Activated CD4-positive, alpha-beta T cell treated with anti-CD3 and anti-CD28 coated beads for 36 hours (primary cell): ENCODE measurements at regions of chr19 and their contacts with region 1.

Region 1: GRCh38 chr19:47428177-47428894 is 9.0 kb upstream of the MEIS3 start:
- DNase-seq: peak; percentile 94
- ATAC-seq: peak; percentile 75
- H3K4me3 Mint-ChIP-seq: no peak overlapping the region
- H3K27ac Mint-ChIP-seq: no peak overlapping the region
- H3K4me1 Mint-ChIP-seq: peaks cover 13% of the 10 kb centered on the region
- H3K27me3 Mint-ChIP-seq: peaks cover 39% of the 10 kb centered on the region

Region 2: GRCh38 chr19:47296036-47296435 is 132.3 kb before region 1 on chr19:
- CTCF ChIA-PET with region 1: interaction called, 17 read pairs
- POLR2A ChIA-PET with region 1: no interaction called
- intact Hi-C with region 1: loop called (anchors 1 kb)
- DNase-seq: peak; percentile 87
- ATAC-seq: peak; percentile 98
- H3K4me3 Mint-ChIP-seq: no peak overlapping the region
- H3K27ac Mint-ChIP-seq: no peak overlapping the region
- H3K4me1 Mint-ChIP-seq: peaks cover 2% of the 10 kb centered on the region
- H3K27me3 Mint-ChIP-seq: no peaks in the 10 kb centered on the region

Region 3: GRCh38 chr19:47391510-47392223 is 36.7 kb before region 1 on chr19:
- CTCF ChIA-PET with region 1: interaction called, 7 read pairs
- POLR2A ChIA-PET with region 1: no interaction called
- intact Hi-C with region 1: loop called in 1 of 2 experiments (anchors 2 kb)
- DNase-seq: peak; percentile 92
- ATAC-seq: peak; percentile 95
- H3K4me3 Mint-ChIP-seq: no peak overlapping the region
- H3K27ac Mint-ChIP-seq: no peak overlapping the region
- H3K4me1 Mint-ChIP-seq: no peaks in the 10 kb centered on the region
- H3K27me3 Mint-ChIP-seq: no peaks in the 10 kb centered on the region

Region 4: GRCh38 chr19:47447470-47448359 is 19.4 kb after region 1 on chr19:
- CTCF ChIA-PET with region 1: interaction called, 11 read pairs
- POLR2A ChIA-PET with region 1: no interaction called
- intact Hi-C with region 1: loop called in 1 of 2 experiments (anchors 1 kb)
- DNase-seq: peak; percentile 90
- ATAC-seq: peak; percentile 85
- H3K4me3 Mint-ChIP-seq: peak overlapping the region; percentile 1
- H3K27ac Mint-ChIP-seq: no peak overlapping the region
- H3K4me1 Mint-ChIP-seq: peaks cover 44% of the 10 kb centered on the region
- H3K27me3 Mint-ChIP-seq: peaks cover 56% of the 10 kb centered on the region

Region 5: GRCh38 chr19:47561440-47562057 is 133.2 kb after region 1 on chr19:
- CTCF ChIA-PET with region 1: no interaction called
- POLR2A ChIA-PET with region 1: no interaction called
- intact Hi-C with region 1: no loop called
- DNase-seq: no peak
- ATAC-seq: no peak
- H3K4me3 Mint-ChIP-seq: no peak overlapping the region
- H3K27ac Mint-ChIP-seq: no peak overlapping the region
- H3K4me1 Mint-ChIP-seq: no peaks in the 10 kb centered on the region
- H3K27me3 Mint-ChIP-seq: no peaks in the 10 kb centered on the region

Region 6: GRCh38 chr19:47600246-47601179 is 172.2 kb after region 1 on chr19:
- CTCF ChIA-PET with region 1: interaction called, 3 read pairs
- POLR2A ChIA-PET with region 1: no interaction called
- intact Hi-C with region 1: loop called in 1 of 2 experiments (anchors 1 kb)
- DNase-seq: peak; percentile 100
- ATAC-seq: peak; percentile 98
- H3K4me3 Mint-ChIP-seq: peak overlapping the region; percentile 79
- H3K27ac Mint-ChIP-seq: peak overlapping the region; percentile 89
- H3K4me1 Mint-ChIP-seq: peaks cover 31% of the 10 kb centered on the region
- H3K27me3 Mint-ChIP-seq: no peaks in the 10 kb centered on the region

Region 7: GRCh38 chr19:47697863-47698609 is 269.7 kb after region 1 on chr19:
- CTCF ChIA-PET with region 1: interaction called, 12 read pairs
- POLR2A ChIA-PET with region 1: no interaction called
- intact Hi-C with region 1: no loop called
- DNase-seq: peak; percentile 80
- ATAC-seq: peak; percentile 88
- H3K4me3 Mint-ChIP-seq: no peak overlapping the region
- H3K27ac Mint-ChIP-seq: peak overlapping the region; percentile 37
- H3K4me1 Mint-ChIP-seq: no peaks in the 10 kb centered on the region
- H3K27me3 Mint-ChIP-seq: no peaks in the 10 kb centered on the region